ENCODE measurements at regions of chr22 and their contacts with region 1.

Region 1: GRCh38 chr22:45553351-45554039 is 50.8 kb downstream of the FBLN1 start:
- DNase-seq: peak; percentile 71
- H3K4me3 ChIP-seq: 0 out of 2 replicates have a peak overlapping the region, but pooled peaks have one; percentile 13
- H3K27ac ChIP-seq: peak overlapping the region; percentile 97
- H3K27me3 ChIP-seq: no peaks in the 10 kb centered on the region
- CTCF ChIP-seq: peak; percentile 98

Region 2: DNA sequence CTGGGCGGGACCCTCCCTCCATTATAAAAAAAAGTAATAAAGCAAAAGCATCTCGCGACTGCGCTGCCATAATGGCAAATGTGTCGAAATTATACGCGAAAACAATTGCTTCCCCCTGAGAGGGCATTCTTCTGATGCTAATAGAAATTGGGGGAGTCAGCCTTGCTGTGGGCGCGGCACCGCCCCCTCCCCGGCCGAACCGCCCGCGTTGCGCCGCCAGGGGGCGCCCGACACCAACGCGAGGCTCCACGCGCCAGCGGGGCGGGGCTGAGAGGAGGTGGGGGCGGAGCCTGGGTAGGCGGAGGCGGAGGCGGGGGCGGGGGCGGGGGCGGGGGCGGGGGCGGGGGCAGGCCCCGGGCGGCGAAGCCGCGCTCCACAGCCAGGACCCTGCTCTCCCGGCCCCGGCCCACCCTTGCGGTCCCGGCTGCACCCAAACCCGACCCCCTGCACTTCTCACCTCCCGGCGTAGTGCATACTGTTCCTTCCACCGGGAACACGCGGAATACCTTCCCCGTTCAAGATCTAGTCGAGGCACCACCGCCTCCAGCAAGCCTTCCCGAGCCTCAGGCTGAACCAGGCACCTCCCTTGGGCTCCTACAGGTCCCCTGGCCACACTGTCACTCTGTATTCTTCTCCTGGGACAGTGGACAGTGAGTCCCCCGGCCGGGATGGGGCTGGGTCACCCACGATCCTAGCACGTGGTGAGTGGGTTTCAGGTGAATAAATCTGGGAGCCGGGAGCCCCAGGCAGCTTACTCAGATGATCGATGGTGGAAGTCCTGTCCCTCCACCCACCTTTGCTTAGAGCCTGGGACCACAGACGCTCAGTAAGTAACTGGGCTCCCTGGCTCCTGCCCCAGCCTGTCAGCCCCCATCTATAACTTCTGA is 284.3 kb before region 1 on chr22:
- CTCF ChIA-PET with region 1: interaction called, 20 read pairs
- POLR2A ChIA-PET with region 1: no interaction called
- DNase-seq: peak; percentile 23
- H3K4me3 ChIP-seq: peak overlapping the region; percentile 67
- H3K27ac ChIP-seq: no peak overlapping the region
- H3K27me3 ChIP-seq: peaks cover 3% of the 10 kb centered on the region
- CTCF ChIP-seq: peak; percentile 72

Region 3: GRCh38 chr22:45441138-45441537 is 112.4 kb before region 1 on chr22:
- CTCF ChIA-PET with region 1: interaction called, 19 read pairs
- POLR2A ChIA-PET with region 1: interaction called, 3 read pairs
- DNase-seq: no peak
- H3K4me3 ChIP-seq: no peak overlapping the region
- H3K27ac ChIP-seq: no peak overlapping the region
- H3K27me3 ChIP-seq: no peaks in the 10 kb centered on the region
- CTCF ChIP-seq: peak; percentile 82

Region 4: GRCh38 chr22:45502215-45503049 is 51.1 kb before region 1 on chr22 and contains the start of gene FBLN1:
- CTCF ChIA-PET with region 1: interaction called, 13 read pairs
- POLR2A ChIA-PET with region 1: interaction called, 14 read pairs
- DNase-seq: no peak
- H3K4me3 ChIP-seq: peak within 1 kb of the TSS; percentile 95
- H3K27ac ChIP-seq: peak within 1 kb of the TSS; percentile 82
- H3K27me3 ChIP-seq: no peaks in the 10 kb centered on the region
- CTCF ChIP-seq: peak; percentile 23; the same call in 1 of the 2 replicates
- polyA plus RNA-seq, gene FBLN1: 241 and 314 TPM in 2 replicates

Region 5: GRCh38 chr22:45529971-45530575 is 23.4 kb before region 1 on chr22:
- CTCF ChIA-PET with region 1: interaction called, 11 read pairs
- POLR2A ChIA-PET with region 1: interaction called, 13 read pairs
- DNase-seq: peak; percentile 88
- H3K4me3 ChIP-seq: no peak overlapping the region
- H3K27ac ChIP-seq: peak overlapping the region; percentile 97
- H3K27me3 ChIP-seq: no peaks in the 10 kb centered on the region
- CTCF ChIP-seq: no peak

Region 6: GRCh38 chr22:45537734-45538181 is 15.7 kb before region 1 on chr22:
- CTCF ChIA-PET with region 1: interaction called, 13 read pairs
- POLR2A ChIA-PET with region 1: interaction called, 13 read pairs
- DNase-seq: peak; percentile 59
- H3K4me3 ChIP-seq: no peak overlapping the region
- H3K27ac ChIP-seq: peak overlapping the region; percentile 61
- H3K27me3 ChIP-seq: no peaks in the 10 kb centered on the region
- CTCF ChIP-seq: no peak

Region 7: GRCh38 chr22:45742866-45743450 is 189.5 kb after region 1 on chr22:
- CTCF ChIA-PET with region 1: no interaction called
- POLR2A ChIA-PET with region 1: no interaction called
- DNase-seq: no peak
- H3K4me3 ChIP-seq: no peak overlapping the region
- H3K27ac ChIP-seq: no peak overlapping the region
- H3K27me3 ChIP-seq: no peaks in the 10 kb centered on the region
- CTCF ChIP-seq: no peak